Dorsolateral prefrontal cortex (tissue), 120 donors: ENCODE measurements at regions of chr14 and their contacts with region 1.

Region 1: DNA sequence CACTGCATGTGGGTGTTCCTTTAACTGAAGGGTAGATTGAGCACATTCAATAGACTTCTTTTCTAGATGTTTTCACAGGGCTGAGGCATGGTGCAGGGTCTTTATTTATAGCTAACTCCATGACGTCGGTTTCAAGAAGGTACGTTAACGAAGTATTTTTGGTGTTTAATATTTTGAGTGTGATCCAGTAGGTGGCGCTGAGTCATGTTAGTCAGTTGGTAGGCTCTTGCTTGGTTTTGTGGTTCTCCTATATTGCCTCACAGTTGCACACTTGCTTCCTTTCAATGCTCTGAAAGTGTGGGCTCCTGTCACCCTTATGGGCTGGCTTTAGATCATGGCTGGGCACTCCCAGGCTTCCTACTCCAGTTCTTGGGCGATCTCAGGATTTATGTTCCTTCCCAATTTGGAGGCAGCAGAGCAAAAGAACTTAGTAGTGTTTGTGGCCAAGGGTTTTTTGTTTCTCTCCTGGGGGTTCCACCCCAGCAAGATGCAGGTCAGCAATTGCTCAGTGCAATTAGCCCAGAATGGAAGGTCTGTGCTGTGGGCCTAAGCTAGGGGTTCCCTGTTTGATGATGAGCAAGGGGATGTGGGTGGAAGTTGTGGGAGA is 471.6 kb upstream of the FOXG1 start:
- DNase-seq: no peak
- H3K4me3 ChIP-seq: no peak overlapping the region
- H3K27ac ChIP-seq: no peak overlapping the region
- H3K27me3 ChIP-seq: no peaks in the 10 kb centered on the region
- CTCF ChIP-seq: peak in 8 of 56 donors; percentile 9 to 25 (median 17)

Region 2: GRCh38 chr14:27929797-27930347 is 365.1 kb before region 1 on chr14:
- intact Hi-C with region 1: no loop called
- DNase-seq: no peak
- H3K4me3 ChIP-seq: no peak overlapping the region
- H3K27ac ChIP-seq: no peak overlapping the region
- H3K27me3 ChIP-seq: peaks cover 0 to 3% (median 0%) of the 10 kb centered on the region in 45 donors
- CTCF ChIP-seq: no peak

Region 3: DNA sequence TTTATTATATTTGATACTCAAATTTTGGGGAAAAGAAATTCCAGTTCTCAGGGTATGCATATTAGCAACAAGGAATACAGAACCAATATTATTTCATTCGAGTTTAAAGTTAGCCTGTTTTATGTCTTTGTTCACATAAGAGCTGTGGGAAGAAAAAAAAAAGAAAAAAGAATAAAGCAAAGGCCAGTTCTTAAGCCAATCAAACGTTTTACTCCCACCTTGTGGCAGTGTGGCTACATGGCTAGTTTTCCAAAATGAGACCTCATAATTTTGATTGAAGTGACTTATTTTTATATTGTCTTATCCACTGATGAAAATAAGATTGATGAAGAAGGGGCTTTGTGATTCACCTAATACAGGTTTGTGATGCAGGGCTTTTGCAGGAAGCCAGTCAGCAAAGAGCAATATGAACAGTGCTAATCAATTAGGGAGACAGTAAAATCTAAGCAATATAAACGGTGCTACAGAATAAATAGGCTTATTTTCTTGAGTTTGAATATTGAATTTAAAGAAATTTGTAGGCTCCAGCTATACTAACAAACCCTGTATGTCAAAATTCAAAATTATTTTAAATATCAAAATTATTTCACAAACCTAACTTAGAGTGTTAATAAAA is 152.4 kb before region 1 on chr14:
- intact Hi-C with region 1: loop called in 1 of 2 experiments (anchors 10 kb)
- DNase-seq: peak in 1 of 10 donors; percentile 29
- H3K4me3 ChIP-seq: peak overlapping the region in 15 of 59 donors; percentile 2 to 54 (median 27)
- H3K27ac ChIP-seq: peak overlapping the region in 40 of 59 donors; percentile 3 to 80 (median 50)
- H3K27me3 ChIP-seq: no peaks in the 10 kb centered on the region
- CTCF ChIP-seq: peak in 54 of 56 donors; percentile 5 to 73 (median 60)

Region 4: GRCh38 chr14:28157887-28158791 is 136.8 kb before region 1 on chr14:
- intact Hi-C with region 1: no loop called
- DNase-seq: no peak
- H3K4me3 ChIP-seq: no peak overlapping the region
- H3K27ac ChIP-seq: no peak overlapping the region
- H3K27me3 ChIP-seq: peaks cover 0 to 3% (median 0%) of the 10 kb centered on the region in 45 donors
- CTCF ChIP-seq: no peak